ENCODE measurements at regions of chr6 and their contacts with region 1.

Region 1: GRCh38 chr6:168370310-168370991 is 50.9 kb upstream of the DACT2 start:
- DNase-seq: no peak

Region 2: GRCh38 chr6:168648240-168649125 is 278.0 kb after region 1 on chr6:
- intact Hi-C with region 1: loop called (anchors 10 kb)
- DNase-seq: no peak

Region 3: DNA sequence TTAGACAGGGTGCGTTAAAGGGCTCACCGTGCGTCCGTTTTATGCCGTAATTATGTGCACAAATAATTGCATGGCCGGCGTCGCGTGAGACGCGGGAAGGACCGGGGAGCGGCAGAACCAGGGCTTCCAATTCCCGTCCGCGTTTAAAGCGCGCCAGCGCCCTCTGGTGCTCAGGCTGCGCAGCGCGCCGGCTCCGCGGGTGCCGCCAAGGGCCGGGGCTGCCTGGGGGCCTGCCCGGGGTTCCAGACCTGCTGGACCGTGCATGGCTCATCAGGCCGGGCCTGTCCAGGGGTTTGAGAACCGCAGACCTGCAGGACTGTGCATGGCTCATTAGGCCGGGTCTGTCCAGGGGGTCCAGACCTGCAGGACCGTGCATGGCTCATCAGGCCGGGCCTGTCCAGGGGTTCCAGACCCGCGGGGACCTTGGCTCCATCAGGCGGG is 514.2 kb after region 1 on chr6:
- intact Hi-C with region 1: loop called (anchors 1 kb)
- DNase-seq: peak; percentile 84